Dendritic cell treated with granulocyte-macrophage colony-stimulating factor and Interleukin-4, amounts not matched to agents 40 ng/mL and 50 ng/mL, for 4 days (primary cell): ENCODE measurements at regions of chr3 and their contacts with region 1.

Region 1: DNA sequence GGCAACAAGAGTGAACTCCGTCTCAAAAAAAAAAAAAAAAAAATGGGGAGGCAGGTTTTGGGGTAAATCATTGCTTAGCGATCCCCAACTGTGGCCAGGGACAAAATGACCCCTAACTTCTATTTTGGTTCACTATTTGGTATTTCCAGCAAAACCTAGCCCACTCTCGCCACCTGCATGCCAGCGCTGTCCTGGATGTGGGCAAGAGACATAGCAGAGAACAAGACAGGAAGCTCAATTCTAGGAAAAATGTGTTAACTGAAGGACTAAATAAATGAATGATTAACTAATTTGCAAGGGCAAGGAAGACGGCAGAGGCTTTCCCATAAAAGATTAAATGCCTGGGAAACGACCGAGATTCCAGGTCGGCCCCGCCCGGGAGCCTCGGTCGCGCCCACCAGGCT is 425 bp downstream of the NICN1 start:
- H3K4me3 Mint-ChIP-seq: peak overlapping the region; percentile 91
- H3K27ac Mint-ChIP-seq: peak overlapping the region; percentile 99
- H3K4me1 Mint-ChIP-seq: peaks cover 11% of the 10 kb centered on the region
- H3K27me3 Mint-ChIP-seq: no peaks in the 10 kb centered on the region

Region 2: GRCh38 chr3:49411968-49412631 is 16.6 kb before region 1 on chr3 and contains the starts of genes RHOA and TCTA:
- intact Hi-C with region 1: loop called (anchors 1 kb)
- H3K4me3 Mint-ChIP-seq: peak within 1 kb of the TSS; percentile 96
- H3K27ac Mint-ChIP-seq: peak within 1 kb of the TSS; percentile 95
- H3K4me1 Mint-ChIP-seq: peaks cover 72% of the 10 kb centered on the region
- H3K27me3 Mint-ChIP-seq: no peaks in the 10 kb centered on the region

Region 3: GRCh38 chr3:49512771-49513358 is 84.2 kb after region 1 on chr3:
- intact Hi-C with region 1: no loop called
- H3K4me3 Mint-ChIP-seq: no peak overlapping the region
- H3K27ac Mint-ChIP-seq: no peak overlapping the region
- H3K4me1 Mint-ChIP-seq: peaks cover 4% of the 10 kb centered on the region
- H3K27me3 Mint-ChIP-seq: no peaks in the 10 kb centered on the region